ENCODE measurements at regions of chr2 and their contacts with region 1.

Region 1: GRCh38 chr2:119290859-119291587 is 67.4 kb downstream of the STEAP3 start:
- DNase-seq: peak; percentile 73
- ATAC-seq: peak; percentile 60
- H3K4me3 Mint-ChIP-seq: no peak overlapping the region
- H3K27ac Mint-ChIP-seq: no peak overlapping the region
- H3K4me1 Mint-ChIP-seq: no peaks in the 10 kb centered on the region
- H3K27me3 Mint-ChIP-seq: no peaks in the 10 kb centered on the region

Region 2: DNA sequence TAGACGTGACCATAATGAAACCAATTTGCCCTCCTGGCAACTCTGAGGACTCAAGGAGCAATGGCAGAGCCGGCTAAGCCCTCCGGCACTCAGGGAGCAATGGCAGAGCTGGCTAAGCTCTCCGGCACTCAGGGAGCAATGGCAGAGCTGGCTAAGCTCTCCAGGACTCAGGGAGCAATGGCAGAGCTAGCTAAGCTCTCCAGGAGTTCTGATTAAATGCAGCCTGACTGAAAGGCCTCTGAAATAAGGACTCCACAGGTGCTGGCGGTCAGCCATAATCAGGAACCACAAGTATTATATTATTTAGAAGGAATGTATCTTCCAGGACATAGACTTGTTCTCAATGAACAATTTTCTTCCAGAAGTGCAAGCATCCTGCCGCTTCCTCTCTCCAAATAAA is 10.4 kb after region 1 on chr2:
- CTCF ChIA-PET with region 1: interaction called, 10 read pairs
- DNase-seq: no peak
- ATAC-seq: no peak
- H3K4me3 Mint-ChIP-seq: no peak overlapping the region
- H3K27ac Mint-ChIP-seq: no peak overlapping the region
- H3K4me1 Mint-ChIP-seq: no peaks in the 10 kb centered on the region
- H3K27me3 Mint-ChIP-seq: no peaks in the 10 kb centered on the region

Measured in activated CD8-positive, alpha-beta memory T cell treated with anti-CD3 and anti-CD28 coated beads, Interleukin-2, amount 10 ng/mL, durations not matched to agents 7 days and 5 days (primary cell).